Heart left ventricle (tissue), 16 donors: ENCODE measurements at regions of chr2 and their contacts with region 1.

Region 1: DNA sequence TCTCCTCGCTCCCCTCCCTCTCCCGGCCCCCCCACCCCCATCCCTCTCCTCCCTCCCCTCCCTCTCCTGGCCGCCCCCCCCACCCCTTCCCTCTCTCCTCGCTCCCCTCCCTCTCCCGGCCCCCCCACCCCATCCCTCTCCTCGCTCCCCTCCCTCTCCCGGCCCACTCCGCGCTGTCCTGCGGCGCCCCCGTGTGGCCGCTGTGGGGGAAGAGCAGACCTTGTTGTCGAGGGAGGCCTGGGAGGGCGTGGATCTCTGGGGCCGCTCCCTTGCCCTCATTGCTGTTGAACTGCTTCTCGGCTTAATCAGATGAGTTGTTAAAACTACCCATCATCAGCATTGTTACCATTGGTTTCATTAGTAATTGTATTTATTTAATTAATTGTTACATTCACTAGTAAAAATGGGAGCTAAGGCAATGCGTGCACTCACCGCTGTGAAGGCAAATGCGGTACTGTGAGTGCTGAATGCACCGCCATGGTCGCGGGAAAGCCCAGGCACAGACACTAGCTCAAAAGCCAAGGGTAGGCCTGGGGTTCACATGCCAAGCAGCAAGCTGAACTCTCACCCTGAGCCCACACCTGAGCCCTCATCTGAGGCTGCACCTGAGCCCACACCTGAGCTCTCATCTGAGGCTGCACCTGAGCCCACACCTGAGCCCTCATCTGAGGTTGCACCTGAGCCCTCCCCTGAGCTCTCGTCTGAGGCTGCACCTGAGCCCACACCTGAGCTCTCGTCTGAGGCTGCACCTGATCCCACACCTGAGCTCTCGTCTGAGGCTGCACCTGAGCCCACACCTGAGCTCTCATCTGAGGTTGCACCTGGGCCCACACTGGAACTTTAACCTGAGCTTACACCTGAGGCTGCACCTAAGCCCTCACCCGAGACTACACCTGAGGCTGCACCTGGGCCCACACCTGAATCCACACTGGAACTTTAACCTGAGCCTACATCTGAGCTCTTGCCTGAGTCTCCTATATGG is 8.8 kb downstream of the RTP5 start:
- DNase-seq: peak; percentile 62 to 86 (median 71)
- ATAC-seq: peak in 3 of 4 donors; percentile 17 to 42 (median 24)
- H3K4me3 ChIP-seq: no peak overlapping the region
- H3K27ac ChIP-seq: no peak overlapping the region
- H3K4me1 ChIP-seq: peaks cover 0 to 28% (median 13%) of the 10 kb centered on the region in 12 donors
- H3K27me3 ChIP-seq: no peaks in the 10 kb centered on the region
- CTCF ChIP-seq: peak; percentile 51 to 72 (median 66)
- POLR2A ChIP-seq: no peak

Region 2: GRCh38 chr2:241702132-241703031 is 175.9 kb before region 1 on chr2:
- intact Hi-C with region 1: loop called in 2 of 10 experiments (anchors 2 to 10 kb)
- DNase-seq: peak; percentile 86 to 94 (median 87)
- ATAC-seq: peak; percentile 82 to 94 (median 90)
- H3K4me3 ChIP-seq: peak overlapping the region; percentile 63 to 99 (median 85)
- H3K27ac ChIP-seq: peak overlapping the region; percentile 70 to 97 (median 91)
- H3K4me1 ChIP-seq: peaks cover 0 to 21% (median 14%) of the 10 kb centered on the region in 12 donors
- H3K27me3 ChIP-seq: no peaks in the 10 kb centered on the region
- CTCF ChIP-seq: peak in 11 of 12 donors; percentile 10 to 66 (median 38)
- POLR2A ChIP-seq: peak in 1 of 2 donors; percentile 8

Region 3: DNA sequence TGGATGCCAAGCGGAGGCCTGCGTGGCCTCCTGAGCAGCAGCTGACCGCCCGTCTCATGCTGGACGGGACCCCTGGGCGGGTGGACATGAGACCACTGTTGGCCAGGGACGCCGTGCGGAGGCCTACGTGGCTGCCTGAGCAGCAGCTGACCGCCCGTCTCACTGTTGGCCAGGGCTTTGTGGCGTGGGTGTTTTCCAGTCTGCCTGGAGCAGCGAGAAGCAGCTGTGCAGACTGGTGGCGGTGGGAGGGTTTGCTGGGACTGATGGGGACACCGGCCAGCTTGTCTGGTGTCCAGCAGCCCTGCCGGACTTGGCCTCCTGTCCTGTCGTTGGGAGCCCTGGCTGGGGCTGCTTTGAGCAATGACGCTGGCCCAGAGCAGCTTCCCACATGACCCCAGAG is 149.7 kb before region 1 on chr2:
- intact Hi-C with region 1: loop called in 6 of 10 experiments (anchors 5 to 10 kb)
- DNase-seq: peak; percentile 76 to 86 (median 84)
- ATAC-seq: peak; percentile 48 to 90 (median 84)
- H3K4me3 ChIP-seq: no peak overlapping the region
- H3K27ac ChIP-seq: peak overlapping the region in 11 of 12 donors; percentile 16 to 88 (median 64)
- H3K4me1 ChIP-seq: peaks cover 0 to 19% (median 3%) of the 10 kb centered on the region in 12 donors
- H3K27me3 ChIP-seq: no peaks in the 10 kb centered on the region
- CTCF ChIP-seq: no peak
- POLR2A ChIP-seq: no peak

Region 4: DNA sequence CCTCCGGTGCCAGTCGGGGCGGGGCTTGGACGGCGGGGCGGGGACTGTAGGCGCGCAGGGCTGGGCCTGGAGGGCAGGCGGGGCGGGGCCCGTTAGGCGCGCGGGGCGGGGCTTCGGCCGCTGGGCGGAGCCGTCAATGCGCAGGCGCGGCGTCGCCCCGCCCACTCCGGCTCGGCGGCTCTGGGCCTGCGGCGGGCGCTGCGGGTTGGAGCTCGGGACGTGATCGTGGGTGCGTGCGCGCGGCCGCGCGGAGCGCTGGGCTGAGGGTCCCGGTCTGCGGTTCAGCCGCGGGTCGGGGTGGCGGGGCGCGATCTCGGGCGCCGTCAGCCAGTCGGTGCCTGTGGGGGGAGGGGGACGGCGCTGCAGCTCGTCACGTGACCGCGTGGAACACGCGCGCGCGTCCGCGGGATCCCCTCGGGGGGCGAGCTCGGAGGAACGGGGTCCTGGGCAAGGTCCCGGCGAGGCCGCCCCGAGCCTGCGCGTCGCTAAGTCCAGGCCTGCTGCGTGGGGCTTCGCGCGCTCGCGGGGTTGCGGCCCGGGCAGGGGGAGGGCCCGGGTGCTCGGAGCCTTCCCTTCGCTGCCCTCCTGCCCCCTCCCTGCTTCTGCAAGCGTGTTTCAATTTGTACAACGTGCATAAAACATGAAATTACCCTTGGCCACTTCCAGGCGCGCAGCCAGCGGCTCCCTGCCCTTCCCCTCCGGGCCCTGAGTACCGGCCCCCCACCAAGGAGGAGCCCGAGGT is 143.6 kb before region 1 on chr2 and contains the start of gene D2HGDH:
- intact Hi-C with region 1: loop called in 8 of 10 experiments (anchors 5 to 10 kb)
- DNase-seq: peak; percentile 94 to 98 (median 94)
- ATAC-seq: peak; percentile 81 to 96 (median 94)
- H3K4me3 ChIP-seq: peak within 1 kb of the TSS; percentile 67 to 100 (median 94)
- H3K27ac ChIP-seq: peak within 1 kb of the TSS; percentile 70 to 96 (median 90)
- H3K4me1 ChIP-seq: peaks cover 0 to 20% (median 12%) of the 10 kb centered on the region in 12 donors
- H3K27me3 ChIP-seq: no peaks in the 10 kb centered on the region
- CTCF ChIP-seq: no peak
- POLR2A ChIP-seq: peak in 1 of 2 donors; percentile 92
- total RNA-seq, gene D2HGDH: 9.2 to 24.1 (median 20.9) TPM

Region 5: GRCh38 chr2:241817126-241817820 is 61.0 kb before region 1 on chr2:
- intact Hi-C with region 1: no loop called
- DNase-seq: peak in 3 of 5 donors; percentile 17 to 49 (median 25)
- ATAC-seq: peak in 1 of 4 donors; percentile 6
- H3K4me3 ChIP-seq: no peak overlapping the region
- H3K27ac ChIP-seq: peak overlapping the region in 1 of 12 donors; percentile 56
- H3K4me1 ChIP-seq: peaks cover 0 to 17% (median 5%) of the 10 kb centered on the region in 12 donors
- H3K27me3 ChIP-seq: no peaks in the 10 kb centered on the region
- CTCF ChIP-seq: no peak
- POLR2A ChIP-seq: no peak